ENCODE measurements at regions of chr14 and their contacts with region 1.

Region 1: GRCh38 chr14:20530771-20531571 is 25.6 kb downstream of the RNASE10 start:
- DNase-seq: peak; percentile 88
- ATAC-seq: peak; percentile 85
- H3K4me3 ChIP-seq: no peak overlapping the region
- H3K27ac ChIP-seq: no peak overlapping the region
- H3K4me1 ChIP-seq: no peaks in the 10 kb centered on the region
- H3K27me3 ChIP-seq: peaks cover 8% of the 10 kb centered on the region
- CTCF ChIP-seq: peak; percentile 88

Region 2: DNA sequence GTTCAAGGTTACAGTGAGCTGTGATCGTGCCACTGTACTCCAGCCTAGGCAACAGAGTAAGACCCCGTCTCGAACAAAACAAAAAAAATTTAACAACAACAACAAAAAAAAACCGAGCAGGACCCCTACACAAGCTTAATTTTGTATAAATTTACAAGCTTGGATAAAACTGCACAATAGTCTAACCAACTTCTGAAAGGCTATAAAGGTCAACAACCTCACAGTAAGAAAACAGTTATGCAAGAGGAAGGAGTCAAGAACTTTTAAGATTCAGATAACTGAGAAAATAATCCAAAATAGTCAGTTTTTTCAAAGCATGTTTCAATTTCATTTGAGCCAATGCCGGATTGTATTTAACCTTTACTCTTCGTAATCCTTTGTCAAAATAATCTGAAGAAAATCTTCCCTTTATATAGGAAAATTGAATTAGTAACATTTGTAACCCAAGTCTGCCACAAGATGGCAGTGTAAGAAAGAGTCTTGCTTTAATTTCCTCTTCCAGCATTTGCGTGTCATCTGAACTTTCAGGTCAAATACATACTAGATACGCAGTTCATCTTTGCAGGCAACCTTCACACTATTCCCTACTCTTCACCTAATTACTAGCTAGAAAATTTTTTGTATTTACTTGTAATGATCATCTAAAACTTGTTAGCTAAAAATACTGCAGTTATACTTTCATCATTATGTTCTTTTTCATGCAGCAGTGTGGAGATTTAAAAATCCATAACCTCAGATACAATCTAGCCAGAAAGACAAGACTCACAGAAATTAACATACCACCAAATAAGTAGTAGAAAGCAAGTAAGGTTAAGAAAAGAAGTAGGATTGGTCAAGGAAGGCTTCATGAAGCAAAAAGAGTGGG is 203.7 kb before region 1 on chr14:
- CTCF ChIA-PET with region 1: no interaction called
- POLR2A ChIA-PET with region 1: no interaction called
- intact Hi-C with region 1: loop called (anchors 5 kb)
- DNase-seq: peak; percentile 81
- ATAC-seq: peak; percentile 45; the same call in 1 of the 2 replicates
- H3K4me3 ChIP-seq: no peak overlapping the region
- H3K27ac ChIP-seq: no peak overlapping the region
- H3K4me1 ChIP-seq: peaks cover 7% of the 10 kb centered on the region
- H3K27me3 ChIP-seq: no peaks in the 10 kb centered on the region
- CTCF ChIP-seq: peak; percentile 88

Region 3: GRCh38 chr14:20606190-20606901 is 75.4 kb after region 1 on chr14:
- CTCF ChIA-PET with region 1: interaction called, 7 read pairs
- POLR2A ChIA-PET with region 1: no interaction called
- intact Hi-C with region 1: loop called (anchors 1 kb)
- DNase-seq: peak; percentile 72
- ATAC-seq: peak; percentile 37
- H3K4me3 ChIP-seq: no peak overlapping the region
- H3K27ac ChIP-seq: no peak overlapping the region
- H3K4me1 ChIP-seq: peaks cover 25% of the 10 kb centered on the region; the same call in 1 of the 2 replicates
- H3K27me3 ChIP-seq: no peaks in the 10 kb centered on the region
- CTCF ChIP-seq: peak; percentile 89

Region 4: DNA sequence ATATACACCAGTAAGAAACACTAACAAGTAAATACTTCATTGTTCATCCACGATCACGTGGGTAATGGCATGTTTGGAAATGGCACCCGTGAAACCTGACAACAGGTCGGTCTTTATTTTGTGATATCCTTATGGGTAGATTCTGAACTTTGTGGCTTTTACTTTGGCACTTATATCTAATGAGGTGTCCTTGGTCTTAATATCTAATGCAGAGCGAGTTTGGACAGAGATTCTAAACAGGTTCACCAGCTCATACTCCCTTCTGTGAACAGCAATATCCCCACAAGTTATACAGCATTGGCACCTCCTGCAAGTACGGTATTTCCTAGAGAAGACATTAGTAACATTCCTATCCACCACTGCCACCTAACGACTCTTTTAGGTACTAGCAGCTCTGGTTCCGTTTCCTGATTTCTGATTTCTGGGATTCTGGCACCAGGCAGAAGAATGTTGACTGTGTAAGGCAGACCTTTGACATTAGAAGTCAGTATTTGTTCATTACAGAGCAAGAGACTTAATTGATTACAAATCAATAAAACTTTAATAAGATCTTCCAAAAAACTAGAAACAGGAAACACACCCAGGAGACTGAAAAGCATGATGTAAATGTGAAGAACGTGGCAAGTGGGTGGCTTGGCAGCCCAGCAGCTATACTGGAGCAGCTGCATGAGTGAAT is 160.0 kb after region 1 on chr14:
- CTCF ChIA-PET with region 1: no interaction called
- POLR2A ChIA-PET with region 1: no interaction called
- intact Hi-C with region 1: loop called (anchors 2 kb)
- DNase-seq: peak; percentile 86
- ATAC-seq: peak; percentile 89
- H3K4me3 ChIP-seq: peak overlapping the region; percentile 55
- H3K27ac ChIP-seq: no peak overlapping the region
- H3K4me1 ChIP-seq: no peaks in the 10 kb centered on the region
- H3K27me3 ChIP-seq: no peaks in the 10 kb centered on the region
- CTCF ChIP-seq: peak; percentile 92